ENCODE measurements at regions of chr19 and their contacts with region 1.

Region 1: DNA sequence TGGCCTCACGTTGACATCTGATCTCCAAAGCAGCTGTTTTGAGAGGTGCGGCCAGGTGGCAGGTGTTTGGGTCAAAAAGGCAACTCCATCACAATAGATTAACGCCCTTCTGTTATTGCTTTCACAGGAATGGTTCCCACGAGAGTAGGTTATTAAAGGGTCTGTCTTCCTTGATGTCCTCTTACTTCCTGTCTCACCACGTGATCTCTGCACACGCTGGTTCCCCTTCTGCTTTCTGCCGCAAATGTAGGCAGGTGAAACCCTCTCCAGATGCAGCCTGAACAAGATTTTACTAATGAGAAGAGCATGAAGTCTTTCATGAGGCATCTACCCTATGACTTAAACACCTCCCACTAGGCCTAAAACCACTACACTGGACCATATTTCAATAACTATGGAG is 22.8 kb upstream of the ZNF564 start:
- DNase-seq: peak in 1 of 3 donors; percentile 8
- ATAC-seq: peak; percentile 56
- H3K4me3 ChIP-seq: no peak overlapping the region
- H3K4me1 ChIP-seq: no peaks in the 10 kb centered on the region
- CTCF ChIP-seq: no peak

Region 2: DNA sequence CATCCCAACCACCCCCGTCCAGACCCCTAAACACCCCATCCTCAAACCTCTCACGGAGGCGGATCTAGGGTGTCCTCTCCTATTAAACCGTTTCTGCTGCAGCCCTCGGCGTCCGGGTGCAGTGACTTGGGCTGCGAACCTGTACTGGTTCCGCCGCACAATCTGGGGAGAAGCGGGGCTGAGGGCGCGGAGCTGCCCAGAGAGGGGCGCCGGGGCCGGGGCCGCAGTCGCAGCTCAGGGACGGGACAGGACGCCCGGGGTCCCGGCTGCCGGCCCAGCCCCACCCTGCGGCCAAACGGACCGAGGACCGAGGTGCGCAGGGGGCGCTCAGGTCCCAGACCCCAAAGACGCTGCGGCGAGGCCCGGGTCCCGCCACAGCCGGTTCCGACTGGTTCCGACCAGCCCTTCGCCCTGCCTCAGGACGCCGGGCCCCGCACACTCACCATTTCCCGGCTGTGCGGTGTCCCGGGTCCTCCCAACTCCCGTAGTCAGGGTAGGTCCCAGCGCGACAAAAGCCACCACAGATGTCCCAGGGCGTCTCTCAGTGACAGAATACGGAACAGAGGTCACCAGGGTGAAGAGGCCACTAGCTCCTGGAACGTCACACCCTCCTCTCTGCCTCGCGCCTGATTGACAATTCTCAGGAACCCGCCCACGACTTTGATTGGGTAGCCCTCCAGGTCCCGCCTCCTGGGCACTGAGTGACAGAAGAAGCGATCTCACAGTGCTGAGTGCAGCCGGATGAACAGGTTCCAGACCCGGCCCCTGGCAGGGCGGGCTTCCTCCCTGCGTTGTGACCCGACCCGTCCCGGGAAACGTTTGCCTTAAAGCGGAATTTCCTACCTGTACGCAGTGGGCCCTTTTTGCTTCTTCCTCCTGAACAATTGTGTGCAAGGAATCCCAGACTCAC is 279.5 kb before region 1 on chr19 and contains the start of gene ZNF44:
- intact Hi-C with region 1: no loop called
- DNase-seq: peak; percentile 99 to 100 (median 99)
- ATAC-seq: peak; percentile 98
- H3K4me3 ChIP-seq: peak within 1 kb of the TSS; percentile 99
- H3K4me1 ChIP-seq: peaks cover 11% of the 10 kb centered on the region
- CTCF ChIP-seq: no peak
- total RNA-seq, gene ZNF44: 17.8 to 22.8 (median 21.7) TPM

Region 3: DNA sequence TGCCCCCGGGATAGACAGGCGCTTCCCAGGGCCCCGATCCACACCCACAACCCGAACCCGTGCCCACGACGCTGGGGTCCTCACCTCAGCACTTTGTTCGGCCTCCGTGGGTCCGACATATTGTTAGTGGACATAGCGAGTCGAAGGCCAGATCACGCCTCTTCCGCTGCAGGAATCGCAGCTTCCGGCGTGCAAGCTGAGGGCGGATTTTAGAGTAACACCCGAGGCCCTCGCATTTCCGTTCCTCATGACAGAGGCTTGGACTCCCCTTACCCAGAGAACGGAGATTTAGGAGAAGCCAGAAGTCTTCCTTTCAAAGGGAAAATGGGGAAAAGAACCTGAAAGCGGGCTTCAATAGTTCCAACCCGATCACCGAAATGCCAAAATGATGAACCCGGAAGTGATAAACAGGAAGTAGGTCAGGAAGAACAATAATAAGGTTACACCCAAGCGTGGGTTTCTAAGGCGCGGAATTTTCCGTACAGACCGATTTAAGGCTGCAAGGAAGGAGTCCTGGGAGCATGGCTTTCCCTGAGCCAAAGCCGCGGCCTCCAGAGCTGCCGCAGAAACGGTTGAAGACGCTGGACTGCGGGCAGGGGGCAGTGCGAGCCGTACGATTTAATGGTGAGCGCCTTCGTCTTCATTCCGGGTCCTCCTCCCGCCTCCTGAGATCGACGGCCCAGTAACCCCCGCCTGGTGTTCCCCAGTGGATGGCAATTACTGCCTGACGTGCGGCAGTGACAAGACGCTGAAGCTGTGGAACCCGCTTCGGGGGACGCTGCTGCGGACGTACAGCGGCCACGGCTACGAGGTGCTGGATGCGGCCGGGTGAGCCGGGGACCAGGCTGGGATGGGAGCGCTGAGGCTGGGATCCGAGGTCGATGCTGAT is 95.5 kb after region 1 on chr19:
- intact Hi-C with region 1: loop called in 1 of 2 experiments (anchors 10 kb)
- DNase-seq: peak; percentile 83 to 87 (median 85)
- ATAC-seq: peak; percentile 78
- H3K4me3 ChIP-seq: peak overlapping the region; percentile 77
- H3K4me1 ChIP-seq: peaks cover 33% of the 10 kb centered on the region
- CTCF ChIP-seq: no peak

Measured in mucosa of descending colon (tissue), 3 donors.